Activated naive CD4-positive, alpha-beta T cell treated with anti-CD3 and anti-CD28 coated beads for 36 hours (primary cell): ENCODE measurements at regions of chr16 and their contacts with region 1.

Region 1: GRCh38 chr16:11621920-11622651 is 35.4 kb upstream of the LITAF start:
- DNase-seq: peak; percentile 43
- H3K4me3 Mint-ChIP-seq: peak overlapping the region; percentile 70
- H3K27ac Mint-ChIP-seq: peak overlapping the region; percentile 65
- H3K4me1 Mint-ChIP-seq: peaks cover 61% of the 10 kb centered on the region
- H3K27me3 Mint-ChIP-seq: no peaks in the 10 kb centered on the region

Region 2: DNA sequence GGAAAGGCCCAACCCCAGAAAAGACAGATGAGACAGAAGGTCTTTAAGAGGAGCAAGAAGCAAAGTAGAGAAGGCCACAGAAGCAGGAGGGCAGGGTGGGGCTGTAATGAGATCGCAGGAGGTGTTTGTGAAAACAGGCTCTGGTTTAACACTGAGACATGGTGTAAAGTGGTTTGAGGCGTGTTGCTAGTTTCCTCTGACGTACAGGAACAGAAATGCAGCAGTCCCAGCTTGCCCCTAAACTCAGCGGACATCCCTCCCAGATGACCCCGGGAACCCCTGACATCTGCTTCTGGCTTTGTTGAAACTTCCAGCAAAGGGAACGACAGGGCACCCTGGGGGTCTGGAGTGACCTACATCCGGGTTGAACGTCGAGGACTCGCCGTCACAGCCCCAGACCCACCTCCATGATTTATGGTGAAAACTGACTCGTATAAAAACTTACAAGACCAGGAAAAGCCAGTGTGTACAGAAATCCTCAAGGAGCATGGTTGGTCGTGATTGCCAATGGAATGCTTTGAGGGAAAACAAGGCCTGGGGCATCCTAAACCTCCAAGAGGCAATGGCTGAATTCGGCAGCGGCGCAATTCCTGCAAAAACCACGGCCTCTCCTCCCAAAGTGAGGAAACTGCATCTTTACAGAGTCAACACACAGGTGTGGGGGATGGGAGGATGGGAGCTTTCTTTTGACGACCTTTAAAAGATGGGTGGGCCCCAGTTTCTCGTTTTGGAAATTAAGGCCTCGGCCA is 61.2 kb before region 1 on chr16:
- CTCF ChIA-PET with region 1: no interaction called
- intact Hi-C with region 1: loop called (anchors 1 kb)
- DNase-seq: peak; percentile 84
- H3K4me3 Mint-ChIP-seq: peak overlapping the region; percentile 76
- H3K27ac Mint-ChIP-seq: peak overlapping the region; percentile 96
- H3K4me1 Mint-ChIP-seq: peaks cover 82% of the 10 kb centered on the region
- H3K27me3 Mint-ChIP-seq: no peaks in the 10 kb centered on the region

Region 3: GRCh38 chr16:11651796-11652195 is 29.7 kb after region 1 on chr16:
- CTCF ChIA-PET with region 1: no interaction called
- intact Hi-C with region 1: no loop called
- DNase-seq: no peak
- H3K4me3 Mint-ChIP-seq: no peak overlapping the region
- H3K27ac Mint-ChIP-seq: no peak overlapping the region
- H3K4me1 Mint-ChIP-seq: peaks cover 11% of the 10 kb centered on the region
- H3K27me3 Mint-ChIP-seq: no peaks in the 10 kb centered on the region

Region 4: DNA sequence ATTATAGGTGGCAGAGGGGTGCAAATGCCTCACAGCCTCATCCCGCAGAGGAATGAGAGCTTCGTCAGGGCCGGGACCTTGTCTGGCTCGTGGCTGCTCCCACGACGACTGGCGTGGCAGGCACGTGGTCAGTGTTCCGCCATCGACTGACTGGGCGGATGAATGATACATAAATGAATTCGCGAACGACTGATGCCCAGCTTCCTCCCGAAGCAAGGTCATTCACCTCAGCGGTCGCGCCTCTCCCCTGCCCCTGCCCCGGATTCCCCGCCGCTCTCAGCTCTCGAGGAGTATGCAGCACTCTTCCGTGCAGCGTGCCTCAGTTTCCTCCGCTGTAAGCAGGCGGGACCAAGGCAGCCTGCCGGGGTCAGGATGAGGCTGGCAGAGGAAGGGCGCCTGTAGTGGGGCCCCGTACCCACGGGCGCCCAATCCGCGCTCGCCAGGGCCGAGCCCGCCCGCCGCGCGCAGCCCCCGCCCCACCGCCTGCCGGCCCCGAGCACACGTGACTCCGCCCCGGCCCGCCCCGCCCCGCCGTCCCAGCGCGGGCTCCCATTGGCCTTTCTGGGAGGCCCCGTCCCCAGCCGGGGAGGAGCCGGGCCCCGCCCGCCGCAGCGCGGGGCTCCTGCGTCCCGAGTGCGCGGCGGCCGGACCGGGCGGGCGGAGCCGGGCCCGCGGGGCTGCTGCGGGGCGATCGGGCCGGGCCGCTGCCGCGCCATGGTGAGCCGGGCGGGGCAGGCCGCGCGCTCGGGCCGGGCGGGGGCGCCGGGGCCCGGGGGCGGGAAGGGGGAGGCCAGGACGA is 45.9 kb after region 1 on chr16 and contains the start of gene SNN:
- CTCF ChIA-PET with region 1: no interaction called
- intact Hi-C with region 1: no loop called
- DNase-seq: peak; percentile 89
- H3K4me3 Mint-ChIP-seq: peak within 1 kb of the TSS; percentile 72
- H3K27ac Mint-ChIP-seq: no peak within 1 kb of the TSS
- H3K4me1 Mint-ChIP-seq: peaks cover 71% of the 10 kb centered on the region
- H3K27me3 Mint-ChIP-seq: no peaks in the 10 kb centered on the region
- total RNA-seq, gene SNN: 12.0 to 13.6 TPM